Dendritic cell treated with granulocyte-macrophage colony-stimulating factor and Interleukin-4, amounts not matched to agents 40 ng/mL and 50 ng/mL, for 4 days (primary cell): ENCODE measurements at regions of chr11 and their contacts with region 1.

Region 1: GRCh38 chr11:65274735-65275682 is 13.2 kb downstream of the POLA2 start:
- H3K4me3 Mint-ChIP-seq: no peak overlapping the region
- H3K27ac Mint-ChIP-seq: no peak overlapping the region
- H3K4me1 Mint-ChIP-seq: peaks cover 12% of the 10 kb centered on the region
- H3K27me3 Mint-ChIP-seq: no peaks in the 10 kb centered on the region

Region 2: GRCh38 chr11:65141896-65142494 is 133.0 kb before region 1 on chr11:
- intact Hi-C with region 1: no loop called
- H3K4me3 Mint-ChIP-seq: no peak overlapping the region
- H3K27ac Mint-ChIP-seq: no peak overlapping the region
- H3K4me1 Mint-ChIP-seq: no peaks in the 10 kb centered on the region
- H3K27me3 Mint-ChIP-seq: peaks cover 3% of the 10 kb centered on the region

Region 3: GRCh38 chr11:65243773-65244172 is 31.2 kb before region 1 on chr11:
- intact Hi-C with region 1: no loop called
- H3K4me3 Mint-ChIP-seq: no peak overlapping the region
- H3K27ac Mint-ChIP-seq: no peak overlapping the region
- H3K4me1 Mint-ChIP-seq: no peaks in the 10 kb centered on the region
- H3K27me3 Mint-ChIP-seq: no peaks in the 10 kb centered on the region

Region 4: GRCh38 chr11:65314501-65315203 is 39.6 kb after region 1 on chr11 and contains the start of gene CDC42EP2:
- intact Hi-C with region 1: loop called (anchors 1 kb)
- H3K4me3 Mint-ChIP-seq: peak within 1 kb of the TSS; percentile 87
- H3K27ac Mint-ChIP-seq: peak within 1 kb of the TSS; percentile 88
- H3K4me1 Mint-ChIP-seq: peaks cover 64% of the 10 kb centered on the region
- H3K27me3 Mint-ChIP-seq: peaks cover 5% of the 10 kb centered on the region

Region 5: DNA sequence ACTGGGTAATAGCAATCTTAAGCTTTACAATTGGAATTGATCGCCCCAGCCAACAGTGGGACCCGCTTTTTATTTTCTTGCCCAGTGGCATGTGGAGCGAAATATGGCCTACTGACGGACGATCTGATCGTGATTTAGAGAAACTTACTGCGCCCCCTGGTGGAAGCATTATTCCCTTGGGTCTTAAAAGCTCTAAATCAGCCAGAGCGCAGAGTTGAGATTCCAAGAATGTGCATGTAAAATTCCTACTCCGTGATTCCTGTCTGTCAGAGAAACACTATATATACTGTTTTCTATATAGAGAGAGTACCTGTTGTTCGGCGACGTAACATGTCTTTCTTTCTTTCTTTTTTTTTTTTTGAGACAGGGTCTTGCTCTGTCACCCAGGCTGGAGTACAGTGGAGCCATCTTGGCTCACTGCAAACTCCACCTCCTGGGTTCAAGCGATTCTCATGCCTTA is 55.0 kb after region 1 on chr11:
- intact Hi-C with region 1: loop called (anchors 5 kb)
- H3K4me3 Mint-ChIP-seq: peak overlapping the region; percentile 48
- H3K27ac Mint-ChIP-seq: peak overlapping the region; percentile 84
- H3K4me1 Mint-ChIP-seq: peaks cover 20% of the 10 kb centered on the region
- H3K27me3 Mint-ChIP-seq: peaks cover 3% of the 10 kb centered on the region

Region 6: DNA sequence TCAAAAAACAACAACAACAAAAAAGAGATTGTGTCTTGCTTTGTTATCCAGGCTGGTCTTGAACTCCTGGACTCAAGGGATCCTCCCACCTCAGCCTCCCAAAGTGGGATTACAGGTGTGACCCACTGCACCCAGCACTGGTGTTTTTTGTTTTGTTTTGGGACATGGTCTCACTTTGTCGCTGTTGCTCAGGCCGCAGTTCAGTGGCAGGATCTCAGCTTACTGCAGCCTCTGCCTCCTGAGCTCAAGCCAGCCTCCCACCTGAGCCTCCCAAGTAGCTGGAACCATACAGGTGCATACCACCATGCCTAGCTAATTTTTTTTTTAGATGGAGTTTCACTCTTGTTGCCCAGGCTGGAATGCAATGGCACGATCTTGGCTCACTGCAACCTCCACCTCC is 237.3 kb after region 1 on chr11:
- intact Hi-C with region 1: loop called (anchors 5 kb)
- H3K4me3 Mint-ChIP-seq: no peak overlapping the region
- H3K27ac Mint-ChIP-seq: no peak overlapping the region
- H3K4me1 Mint-ChIP-seq: peaks cover 26% of the 10 kb centered on the region
- H3K27me3 Mint-ChIP-seq: peaks cover 6% of the 10 kb centered on the region